SK-N-SH (cell line): ENCODE measurements at regions of chr5 and their contacts with region 1.

Region 1: GRCh38 chr5:54492178-54492577 is 25.4 kb upstream of the SNX18 start:
- DNase-seq: no peak
- H3K4me3 ChIP-seq: no peak overlapping the region
- H3K27ac ChIP-seq: no peak overlapping the region
- H3K4me1 ChIP-seq: no peaks in the 10 kb centered on the region
- H3K27me3 ChIP-seq: peaks cover 12% of the 10 kb centered on the region
- CTCF ChIP-seq: no peak
- EP300 ChIP-seq: no peak
- RAD21 ChIP-seq: no peak

Region 2: GRCh38 chr5:54243473-54244080 is 248.6 kb before region 1 on chr5:
- CTCF ChIA-PET with region 1: interaction called, 24 read pairs
- POLR2A ChIA-PET with region 1: no interaction called
- DNase-seq: peak; percentile 49
- H3K4me3 ChIP-seq: no peak overlapping the region
- H3K27ac ChIP-seq: no peak overlapping the region
- H3K4me1 ChIP-seq: no peaks in the 10 kb centered on the region
- H3K27me3 ChIP-seq: no peaks in the 10 kb centered on the region
- CTCF ChIP-seq: peak; percentile 88
- EP300 ChIP-seq: no peak
- RAD21 ChIP-seq: peak; percentile 86

Region 3: GRCh38 chr5:54457094-54457862 is 34.9 kb before region 1 on chr5:
- CTCF ChIA-PET with region 1: interaction called, 17 read pairs
- POLR2A ChIA-PET with region 1: no interaction called
- DNase-seq: no peak
- H3K4me3 ChIP-seq: peak overlapping the region; percentile 3 to 10; a peak in 2 of 4 replicates
- H3K27ac ChIP-seq: peak overlapping the region; percentile 42 to 78; a peak in 3 of 4 replicates
- H3K4me1 ChIP-seq: peaks cover 5 to 23% of the 10 kb centered on the region in 2 experiments; a peak in 3 of 4 replicates
- H3K27me3 ChIP-seq: no peaks in the 10 kb centered on the region
- CTCF ChIP-seq: no peak
- EP300 ChIP-seq: peak in 1 of 2 experiments; percentile 29; a peak in 1 of 4 replicates
- RAD21 ChIP-seq: no peak

Region 4: GRCh38 chr5:54480296-54480695 is 11.9 kb before region 1 on chr5:
- CTCF ChIA-PET with region 1: interaction called, 17 read pairs
- POLR2A ChIA-PET with region 1: no interaction called
- DNase-seq: no peak
- H3K4me3 ChIP-seq: no peak overlapping the region
- H3K27ac ChIP-seq: no peak overlapping the region
- H3K4me1 ChIP-seq: no peaks in the 10 kb centered on the region
- H3K27me3 ChIP-seq: no peaks in the 10 kb centered on the region
- CTCF ChIP-seq: no peak
- EP300 ChIP-seq: no peak
- RAD21 ChIP-seq: no peak

Region 5: GRCh38 chr5:54547711-54548250 is 55.6 kb after region 1 on chr5:
- CTCF ChIA-PET with region 1: no interaction called
- POLR2A ChIA-PET with region 1: no interaction called
- DNase-seq: no peak
- H3K4me3 ChIP-seq: no peak overlapping the region
- H3K27ac ChIP-seq: no peak overlapping the region
- H3K4me1 ChIP-seq: peaks cover 0 to 4% of the 10 kb centered on the region in 2 experiments; a peak in 2 of 4 replicates
- H3K27me3 ChIP-seq: no peaks in the 10 kb centered on the region
- CTCF ChIP-seq: no peak
- EP300 ChIP-seq: no peak
- RAD21 ChIP-seq: no peak

Region 6: GRCh38 chr5:54696931-54697330 is 204.8 kb after region 1 on chr5:
- CTCF ChIA-PET with region 1: no interaction called
- POLR2A ChIA-PET with region 1: no interaction called
- DNase-seq: no peak
- H3K4me3 ChIP-seq: no peak overlapping the region
- H3K27ac ChIP-seq: no peak overlapping the region
- H3K4me1 ChIP-seq: peaks cover 14 to 24% of the 10 kb centered on the region in 2 experiments; a peak in 2 of 4 replicates
- H3K27me3 ChIP-seq: no peaks in the 10 kb centered on the region
- CTCF ChIP-seq: no peak
- EP300 ChIP-seq: no peak
- RAD21 ChIP-seq: no peak

Region 7: DNA sequence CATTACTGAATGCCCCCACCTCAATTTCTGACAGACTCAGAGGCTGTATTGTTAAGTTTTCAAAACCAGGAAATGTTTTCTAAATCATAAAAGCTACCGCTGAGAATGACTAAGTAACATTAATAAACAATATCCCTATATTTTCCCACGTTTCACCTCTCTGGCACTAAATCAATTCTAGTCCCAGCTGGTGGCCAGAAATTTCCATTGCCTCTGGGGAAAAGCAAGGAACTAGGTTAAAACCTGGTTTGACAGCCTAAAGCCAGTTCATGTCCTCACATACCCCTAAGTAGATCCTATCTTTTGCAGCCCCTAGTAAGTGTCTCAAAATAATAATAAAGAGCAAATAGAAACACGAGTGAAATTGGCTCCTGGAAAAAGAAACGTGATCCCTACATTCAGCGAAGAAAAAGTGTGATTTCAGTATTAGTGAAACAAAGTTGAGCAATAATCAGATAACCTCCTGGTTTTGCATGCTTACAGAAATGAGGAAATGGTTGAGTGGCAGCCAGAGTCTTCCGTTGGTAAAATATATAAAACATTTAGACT is 382.3 kb after region 1 on chr5:
- CTCF ChIA-PET with region 1: interaction called, 10 read pairs
- POLR2A ChIA-PET with region 1: no interaction called
- DNase-seq: no peak
- H3K4me3 ChIP-seq: no peak overlapping the region
- H3K27ac ChIP-seq: no peak overlapping the region
- H3K4me1 ChIP-seq: peaks cover 0 to 7% of the 10 kb centered on the region in 2 experiments; a peak in 1 of 4 replicates
- H3K27me3 ChIP-seq: peaks cover 27% of the 10 kb centered on the region
- CTCF ChIP-seq: no peak
- EP300 ChIP-seq: no peak
- RAD21 ChIP-seq: no peak